GM12878 (cell line): ENCODE measurements at regions of chr2 and their contacts with region 1.

Region 1: DNA sequence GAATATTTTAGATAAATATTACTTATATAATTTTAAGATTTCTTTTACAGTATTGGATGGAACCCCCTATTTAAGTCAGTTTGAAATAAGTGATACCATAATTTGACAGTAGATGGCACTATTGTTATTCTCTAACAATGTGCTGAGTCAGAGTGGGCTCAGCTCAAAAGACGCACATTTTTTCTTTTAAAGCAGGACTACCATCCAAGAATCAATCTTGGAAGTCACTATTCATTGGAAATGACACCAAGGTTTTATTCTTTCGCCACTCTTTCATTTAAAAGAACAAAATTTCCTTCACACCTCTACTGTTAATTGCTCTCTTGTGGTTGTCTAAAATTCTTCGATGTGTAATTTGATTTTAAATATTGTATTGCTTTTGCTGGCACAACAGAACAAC is 32.6 kb upstream of the SPAG16 start:
- DNase-seq: no peak
- ATAC-seq: peak; percentile 87
- H3K4me3 ChIP-seq: no peak overlapping the region
- H3K27ac ChIP-seq: no peak overlapping the region
- H3K4me1 ChIP-seq: peaks cover 6% of the 10 kb centered on the region; the same call in 1 of the 2 replicates
- H3K27me3 ChIP-seq: no peaks in the 10 kb centered on the region
- CTCF ChIP-seq: peak; percentile 38 to 73 (median 47); a peak in 5 of 6 replicates
- EP300 ChIP-seq: no peak
- POLR2A ChIP-seq: no peak
- RAD21 ChIP-seq: peak; percentile 90

Region 2: DNA sequence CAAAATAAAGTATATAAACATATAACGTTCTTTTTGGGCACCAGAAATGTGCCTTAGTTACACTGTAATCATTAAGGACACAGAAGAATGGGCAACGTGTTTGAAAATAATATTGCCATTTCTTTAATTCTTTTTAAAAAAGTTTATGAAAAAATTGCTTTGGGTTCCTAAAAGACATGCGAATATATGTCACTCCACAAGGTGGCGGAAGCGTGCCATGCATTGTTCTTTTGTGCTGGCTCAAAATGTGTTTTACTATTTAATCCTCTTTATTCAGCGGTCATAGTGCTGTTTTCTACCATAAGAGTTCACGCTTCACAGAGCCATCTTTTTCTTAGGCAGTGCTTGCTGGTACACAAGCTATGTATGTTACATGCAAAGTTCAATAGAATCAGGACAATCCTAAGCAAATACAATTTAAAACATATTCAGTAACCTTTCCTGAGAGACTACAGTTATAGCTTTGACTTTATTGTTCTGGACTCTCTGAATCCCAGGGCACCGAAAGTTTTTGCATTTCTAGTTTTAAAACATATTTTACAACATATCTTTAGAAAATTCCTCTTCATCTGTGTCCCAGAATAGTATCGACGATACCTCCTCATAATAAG is 565.2 kb before region 1 on chr2:
- CTCF ChIA-PET with region 1: no interaction called
- POLR2A ChIA-PET with region 1: no interaction called
- RAD21 ChIA-PET with region 1: interaction called, 3 read pairs
- SMC1A ChIA-PET with region 1: interaction called, 3 read pairs
- in situ Hi-C with region 1: no loop called
- intact Hi-C with region 1: loop called (anchors 1 kb)
- DNase-seq: peak; percentile 60
- ATAC-seq: peak; percentile 84
- H3K4me3 ChIP-seq: no peak overlapping the region
- H3K27ac ChIP-seq: no peak overlapping the region
- H3K4me1 ChIP-seq: peaks cover 4% of the 10 kb centered on the region; the same call in 1 of the 2 replicates
- H3K27me3 ChIP-seq: no peaks in the 10 kb centered on the region
- CTCF ChIP-seq: peak; percentile 78 to 90 (median 85)
- EP300 ChIP-seq: no peak
- POLR2A ChIP-seq: no peak
- RAD21 ChIP-seq: peak; percentile 99

Region 3: GRCh38 chr2:213137064-213137463 is 114.6 kb before region 1 on chr2:
- CTCF ChIA-PET with region 1: no interaction called
- POLR2A ChIA-PET with region 1: no interaction called
- RAD21 ChIA-PET with region 1: no interaction called
- SMC1A ChIA-PET with region 1: no interaction called
- in situ Hi-C with region 1: no loop called
- intact Hi-C with region 1: no loop called
- DNase-seq: no peak
- ATAC-seq: no peak
- H3K4me3 ChIP-seq: no peak overlapping the region
- H3K27ac ChIP-seq: no peak overlapping the region
- H3K4me1 ChIP-seq: no peaks in the 10 kb centered on the region
- H3K27me3 ChIP-seq: no peaks in the 10 kb centered on the region
- CTCF ChIP-seq: no peak
- EP300 ChIP-seq: no peak
- POLR2A ChIP-seq: no peak
- RAD21 ChIP-seq: no peak

Region 4: GRCh38 chr2:213284105-213285090 is 32.8 kb after region 1 on chr2 and contains the start of gene SPAG16:
- CTCF ChIA-PET with region 1: interaction called, 16 read pairs
- POLR2A ChIA-PET with region 1: interaction called, 3 read pairs
- RAD21 ChIA-PET with region 1: interaction called, 23 read pairs
- SMC1A ChIA-PET with region 1: interaction called, 11 read pairs
- in situ Hi-C with region 1: no loop called
- intact Hi-C with region 1: no loop called
- DNase-seq: peak; percentile 92
- ATAC-seq: peak; percentile 99
- H3K4me3 ChIP-seq: peak within 1 kb of the TSS; percentile 91
- H3K27ac ChIP-seq: peak within 1 kb of the TSS; percentile 45
- H3K4me1 ChIP-seq: no peaks in the 10 kb centered on the region
- H3K27me3 ChIP-seq: no peaks in the 10 kb centered on the region
- CTCF ChIP-seq: no peak
- EP300 ChIP-seq: no peak
- POLR2A ChIP-seq: peak; percentile 83
- RAD21 ChIP-seq: no peak
- polyA plus RNA-seq, gene SPAG16: 6.0 to 12.8 TPM

Region 5: DNA sequence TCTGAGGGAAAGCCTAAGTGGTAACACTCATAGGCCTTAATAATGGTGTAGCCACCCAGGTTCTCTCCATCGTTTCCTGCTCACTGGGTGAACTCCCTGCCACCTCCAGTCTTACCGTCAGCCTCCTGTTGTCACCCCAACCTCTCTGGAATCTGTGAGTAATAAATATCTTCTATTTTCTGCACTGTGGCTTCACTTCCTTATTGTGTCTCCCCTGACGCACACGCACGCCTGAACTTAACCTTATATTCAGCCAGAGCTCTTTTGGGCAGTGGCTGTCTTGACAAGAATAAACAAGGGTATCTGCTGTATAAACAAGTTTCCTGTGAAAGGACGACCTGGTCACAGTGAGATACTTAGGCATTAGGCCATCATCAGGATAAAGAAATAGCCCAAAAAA is 499.8 kb after region 1 on chr2:
- CTCF ChIA-PET with region 1: no interaction called
- POLR2A ChIA-PET with region 1: no interaction called
- RAD21 ChIA-PET with region 1: no interaction called
- SMC1A ChIA-PET with region 1: no interaction called
- in situ Hi-C with region 1: no loop called
- intact Hi-C with region 1: loop called (anchors 10 kb)
- DNase-seq: peak; percentile 59
- ATAC-seq: peak; percentile 95
- H3K4me3 ChIP-seq: no peak overlapping the region
- H3K27ac ChIP-seq: peak overlapping the region; percentile 22
- H3K4me1 ChIP-seq: peaks cover 3% of the 10 kb centered on the region; the same call in 1 of the 2 replicates
- H3K27me3 ChIP-seq: no peaks in the 10 kb centered on the region
- CTCF ChIP-seq: no peak
- EP300 ChIP-seq: peak; percentile 58 to 90
- POLR2A ChIP-seq: no peak
- RAD21 ChIP-seq: no peak

Region 6: DNA sequence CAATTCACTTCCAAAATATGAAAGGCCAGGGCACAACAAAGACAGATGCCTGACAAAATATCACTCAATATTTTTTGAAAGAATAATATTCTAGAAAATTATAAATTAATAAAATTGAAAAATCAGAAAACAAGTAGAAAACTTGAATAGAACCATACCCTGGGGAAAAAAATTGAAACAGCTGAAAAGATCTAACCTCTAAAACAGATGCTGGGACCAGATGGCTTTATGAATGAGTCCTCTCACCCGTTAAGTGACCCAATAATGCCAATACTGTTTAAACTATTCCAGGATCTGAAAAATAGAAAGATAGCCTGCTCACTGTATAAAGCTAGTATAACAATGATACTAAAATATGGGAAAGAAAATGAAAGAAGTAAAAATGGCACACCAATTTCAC is 836.9 kb after region 1 on chr2:
- CTCF ChIA-PET with region 1: no interaction called
- POLR2A ChIA-PET with region 1: no interaction called
- RAD21 ChIA-PET with region 1: no interaction called
- SMC1A ChIA-PET with region 1: no interaction called
- in situ Hi-C with region 1: no loop called
- intact Hi-C with region 1: loop called (anchors 10 kb)
- DNase-seq: no peak
- ATAC-seq: no peak
- H3K4me3 ChIP-seq: no peak overlapping the region
- H3K27ac ChIP-seq: no peak overlapping the region
- H3K4me1 ChIP-seq: no peaks in the 10 kb centered on the region
- H3K27me3 ChIP-seq: no peaks in the 10 kb centered on the region
- CTCF ChIP-seq: no peak
- EP300 ChIP-seq: no peak
- POLR2A ChIP-seq: no peak
- RAD21 ChIP-seq: no peak

Region 7: GRCh38 chr2:214737188-214737587 is 1485.6 kb after region 1 on chr2:
- CTCF ChIA-PET with region 1: no interaction called
- POLR2A ChIA-PET with region 1: no interaction called
- RAD21 ChIA-PET with region 1: no interaction called
- SMC1A ChIA-PET with region 1: no interaction called
- in situ Hi-C with region 1: loop called (anchors 25 kb)
- intact Hi-C with region 1: no loop called
- DNase-seq: peak; percentile 92
- ATAC-seq: peak; percentile 88
- H3K4me3 ChIP-seq: no peak overlapping the region
- H3K27ac ChIP-seq: peak overlapping the region; percentile 89
- H3K4me1 ChIP-seq: peaks cover 12% of the 10 kb centered on the region
- H3K27me3 ChIP-seq: no peaks in the 10 kb centered on the region
- CTCF ChIP-seq: no peak
- EP300 ChIP-seq: peak; percentile 97 to 98; a peak in 3 of 4 replicates
- POLR2A ChIP-seq: no peak
- RAD21 ChIP-seq: no peak